Upper lobe of right lung (tissue), 1 donor: ENCODE measurements at regions of chr5 and their contacts with region 1.

Region 1: DNA sequence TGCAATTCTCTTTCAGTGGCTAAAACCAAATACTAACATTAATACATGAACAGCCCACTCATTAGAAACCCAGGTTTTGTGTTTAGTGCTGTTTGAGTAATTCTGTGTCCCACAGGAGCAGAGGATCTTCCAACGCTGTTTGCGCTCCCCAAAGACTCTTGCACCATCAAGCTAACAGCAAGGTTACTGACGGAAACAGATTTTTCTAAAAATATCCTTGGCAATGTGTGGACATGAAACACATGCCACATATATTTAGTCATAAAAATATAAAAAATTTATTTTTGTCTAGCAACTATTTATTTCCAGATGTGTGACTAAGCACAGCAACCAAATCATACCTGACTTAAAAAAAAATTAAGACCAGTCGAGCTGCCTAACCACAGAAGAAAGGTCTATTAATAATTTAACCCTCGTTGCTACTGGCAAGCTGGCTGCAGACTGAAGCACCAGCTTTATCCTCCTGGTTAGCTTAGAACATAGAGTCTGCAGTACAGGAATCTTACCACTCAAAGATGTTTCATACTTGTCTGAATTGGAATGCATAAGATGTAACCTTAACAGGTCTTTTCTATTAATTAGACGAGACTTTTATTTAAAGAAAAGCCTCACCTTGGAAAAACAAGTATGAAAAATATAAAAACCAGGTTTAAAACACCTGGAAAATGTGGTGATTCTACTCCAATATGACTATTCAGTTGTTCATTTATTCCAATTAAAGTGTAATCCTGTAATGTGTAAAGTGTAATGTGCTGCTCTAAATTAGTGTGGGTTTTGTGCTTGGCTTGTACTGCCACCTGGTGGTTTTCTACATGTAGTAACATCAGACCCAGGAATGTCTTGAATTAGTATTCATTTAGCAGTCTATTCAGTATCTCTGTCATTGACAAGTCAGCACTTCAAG is 272.5 kb downstream of the EPB41L4A start:
- DNase-seq: no peak
- ATAC-seq: peak; percentile 90
- H3K4me3 ChIP-seq: no peak overlapping the region
- H3K27ac ChIP-seq: no peak overlapping the region
- H3K4me1 ChIP-seq: peaks cover 27% of the 10 kb centered on the region
- H3K27me3 ChIP-seq: no peaks in the 10 kb centered on the region
- CTCF ChIP-seq: peak; percentile 87

Region 2: DNA sequence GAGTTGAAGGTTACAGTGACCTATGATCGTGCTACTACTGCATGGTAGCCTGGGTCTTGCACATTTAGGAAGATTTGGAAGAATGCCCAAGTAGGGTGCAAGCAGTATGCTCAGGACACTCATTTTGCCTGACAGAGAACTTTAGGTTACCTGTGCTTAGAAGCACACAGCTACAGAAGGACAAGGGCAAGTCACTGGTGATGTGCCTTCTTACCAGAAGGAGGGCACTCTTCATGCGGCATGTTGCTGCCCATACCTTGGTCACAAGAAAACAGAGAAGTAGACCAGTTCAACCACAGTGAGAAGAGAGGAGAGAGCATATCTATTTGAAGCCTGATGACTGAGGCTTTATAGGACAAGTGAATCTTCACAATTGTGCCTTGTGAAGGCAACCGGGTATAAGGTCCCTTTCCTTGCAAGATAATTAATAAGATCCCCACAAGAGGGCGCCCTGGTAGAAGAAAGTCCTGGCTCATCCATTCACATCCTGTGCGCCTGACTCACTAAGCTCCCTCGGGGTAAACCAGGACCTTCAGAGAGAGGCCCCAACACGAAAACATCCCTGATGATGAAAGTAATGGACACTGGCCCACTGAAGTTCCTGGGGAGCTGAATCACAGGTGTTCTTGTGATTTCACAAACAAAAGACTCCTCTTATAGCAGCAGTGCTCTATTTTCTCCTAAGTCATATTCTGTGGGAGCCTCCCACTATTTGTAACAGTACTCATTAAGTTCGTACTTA is 596.1 kb before region 1 on chr5:
- intact Hi-C with region 1: loop called (anchors 5 kb)
- DNase-seq: no peak
- ATAC-seq: peak; percentile 97
- H3K4me3 ChIP-seq: no peak overlapping the region
- H3K27ac ChIP-seq: peak overlapping the region; percentile 49
- H3K4me1 ChIP-seq: no peaks in the 10 kb centered on the region
- H3K27me3 ChIP-seq: no peaks in the 10 kb centered on the region
- CTCF ChIP-seq: peak; percentile 66

Region 3: GRCh38 chr5:112320408-112320807 is 173.8 kb after region 1 on chr5:
- intact Hi-C with region 1: no loop called
- DNase-seq: no peak
- ATAC-seq: no peak
- H3K4me3 ChIP-seq: no peak overlapping the region
- H3K27ac ChIP-seq: no peak overlapping the region
- H3K4me1 ChIP-seq: no peaks in the 10 kb centered on the region
- H3K27me3 ChIP-seq: no peaks in the 10 kb centered on the region
- CTCF ChIP-seq: no peak